OCI-LY7 (cell line): ENCODE measurements at regions of chr3 and their contacts with region 1.

Region 1: GRCh38 chr3:197711973-197712707 is 24.6 kb downstream of the RUBCN start:
- DNase-seq: peak; percentile 92
- H3K4me3 ChIP-seq: peak overlapping the region; percentile 60
- H3K27ac ChIP-seq: peak overlapping the region; percentile 82
- H3K4me1 ChIP-seq: peaks cover 66% of the 10 kb centered on the region
- CTCF ChIP-seq: no peak

Region 2: DNA sequence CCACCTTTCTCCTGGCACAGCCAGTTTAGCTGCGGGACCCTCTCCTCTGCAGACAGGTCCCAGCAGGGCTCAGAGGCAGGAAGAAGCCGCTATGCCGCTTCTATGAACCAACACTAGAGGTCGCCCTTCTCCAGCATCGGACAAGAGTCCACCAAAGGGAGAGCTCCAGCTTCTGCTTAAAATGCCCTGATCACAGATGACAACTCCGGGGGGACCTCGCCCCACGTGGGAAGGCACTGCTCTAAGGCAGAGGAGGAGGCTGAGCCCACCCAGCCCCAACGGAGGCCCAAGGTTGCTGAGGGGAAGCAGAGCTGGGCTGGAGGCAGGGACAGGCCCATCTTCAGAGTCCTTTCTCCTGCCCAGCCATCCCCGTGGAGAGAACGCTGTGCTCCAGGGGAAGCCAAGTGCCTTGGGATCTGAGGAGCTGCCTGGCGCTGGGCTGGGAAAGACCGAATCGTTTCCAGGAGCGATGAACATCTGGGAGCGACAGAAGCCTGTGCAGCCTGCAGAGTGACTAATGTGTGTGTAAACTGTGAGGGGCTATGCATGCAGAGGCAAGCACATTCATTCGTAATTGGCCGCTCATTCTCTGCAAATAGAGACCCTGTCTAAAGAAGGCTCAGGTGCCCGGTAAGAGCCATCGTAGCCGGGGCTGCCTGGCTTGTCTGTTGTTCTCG is 112.9 kb before region 1 on chr3:
- CTCF ChIA-PET with region 1: no interaction called
- POLR2A ChIA-PET with region 1: no interaction called
- intact Hi-C with region 1: no loop called
- DNase-seq: peak; percentile 88
- H3K4me3 ChIP-seq: no peak overlapping the region
- H3K27ac ChIP-seq: no peak overlapping the region
- H3K4me1 ChIP-seq: peaks cover 6% of the 10 kb centered on the region
- CTCF ChIP-seq: peak; percentile 92

Region 3: GRCh38 chr3:197725524-197725923 is 13.4 kb after region 1 on chr3:
- CTCF ChIA-PET with region 1: interaction called, 3 read pairs
- POLR2A ChIA-PET with region 1: interaction called, 11 read pairs
- intact Hi-C with region 1: no loop called
- DNase-seq: no peak
- H3K4me3 ChIP-seq: no peak overlapping the region
- H3K27ac ChIP-seq: no peak overlapping the region
- H3K4me1 ChIP-seq: peaks cover 36% of the 10 kb centered on the region
- CTCF ChIP-seq: no peak

Region 4: DNA sequence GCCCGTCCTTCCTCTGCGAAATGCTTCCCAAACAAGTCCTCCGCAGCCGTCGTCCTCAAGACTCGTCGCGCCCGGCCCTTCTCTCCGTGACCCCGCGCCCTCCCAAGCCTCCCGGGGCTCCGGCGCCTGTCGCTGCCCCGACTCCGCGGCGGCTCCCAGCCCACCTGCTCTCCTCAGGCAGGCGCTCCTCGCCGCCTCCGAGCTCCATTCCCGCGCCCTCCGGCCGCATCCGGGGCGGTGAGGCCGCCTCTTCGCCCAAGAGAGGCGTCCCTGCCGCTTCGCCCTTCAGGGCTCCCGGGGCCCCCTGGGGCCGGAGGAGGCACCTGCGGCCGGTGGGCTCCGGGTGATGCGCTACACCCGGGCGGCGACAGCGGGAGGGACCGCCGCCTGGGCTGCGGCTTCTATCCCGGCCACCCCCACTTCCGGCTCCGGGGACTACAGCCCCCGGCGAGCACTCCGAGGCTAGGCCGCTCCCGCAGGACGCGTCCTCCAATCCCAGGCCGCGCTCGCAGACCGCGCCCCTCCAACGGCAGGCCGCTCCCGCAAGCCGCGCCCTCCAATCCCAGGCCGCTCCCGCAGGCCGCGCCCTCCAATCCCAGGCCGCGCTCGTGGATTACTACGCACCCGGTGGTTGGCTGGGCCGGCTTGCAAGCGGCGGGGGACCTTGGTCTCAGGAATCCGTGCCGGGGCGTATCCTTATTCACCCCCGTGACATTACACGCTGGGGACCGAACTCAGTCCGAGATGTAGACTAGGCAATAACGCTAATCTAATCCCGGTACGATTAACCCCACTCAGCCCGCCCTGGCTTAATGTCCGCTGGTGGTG is 24.6 kb after region 1 on chr3 and contains the start of gene RUBCN:
- CTCF ChIA-PET with region 1: interaction called, 3 read pairs
- POLR2A ChIA-PET with region 1: interaction called, 41 read pairs
- intact Hi-C with region 1: loop called (anchors 1 kb)
- DNase-seq: peak; percentile 97
- H3K4me3 ChIP-seq: peak within 1 kb of the TSS; percentile 83
- H3K27ac ChIP-seq: peak within 1 kb of the TSS; percentile 94
- H3K4me1 ChIP-seq: peaks cover 47% of the 10 kb centered on the region
- CTCF ChIP-seq: no peak
- total RNA-seq, gene RUBCN: 37.1 and 45.1 TPM in 2 replicates

Region 5: GRCh38 chr3:197749601-197750395 is 37.7 kb after region 1 on chr3 and contains the start of gene FYTTD1:
- CTCF ChIA-PET with region 1: interaction called, 3 read pairs
- POLR2A ChIA-PET with region 1: interaction called, 5 read pairs
- intact Hi-C with region 1: loop called (anchors 1 kb)
- DNase-seq: peak; percentile 94
- H3K4me3 ChIP-seq: peak within 1 kb of the TSS; percentile 89
- H3K27ac ChIP-seq: peak within 1 kb of the TSS; percentile 76
- H3K4me1 ChIP-seq: peaks cover 41% of the 10 kb centered on the region
- CTCF ChIP-seq: peak; percentile 65
- total RNA-seq, gene FYTTD1: 47.6 and 63.8 TPM in 2 replicates

Region 6: DNA sequence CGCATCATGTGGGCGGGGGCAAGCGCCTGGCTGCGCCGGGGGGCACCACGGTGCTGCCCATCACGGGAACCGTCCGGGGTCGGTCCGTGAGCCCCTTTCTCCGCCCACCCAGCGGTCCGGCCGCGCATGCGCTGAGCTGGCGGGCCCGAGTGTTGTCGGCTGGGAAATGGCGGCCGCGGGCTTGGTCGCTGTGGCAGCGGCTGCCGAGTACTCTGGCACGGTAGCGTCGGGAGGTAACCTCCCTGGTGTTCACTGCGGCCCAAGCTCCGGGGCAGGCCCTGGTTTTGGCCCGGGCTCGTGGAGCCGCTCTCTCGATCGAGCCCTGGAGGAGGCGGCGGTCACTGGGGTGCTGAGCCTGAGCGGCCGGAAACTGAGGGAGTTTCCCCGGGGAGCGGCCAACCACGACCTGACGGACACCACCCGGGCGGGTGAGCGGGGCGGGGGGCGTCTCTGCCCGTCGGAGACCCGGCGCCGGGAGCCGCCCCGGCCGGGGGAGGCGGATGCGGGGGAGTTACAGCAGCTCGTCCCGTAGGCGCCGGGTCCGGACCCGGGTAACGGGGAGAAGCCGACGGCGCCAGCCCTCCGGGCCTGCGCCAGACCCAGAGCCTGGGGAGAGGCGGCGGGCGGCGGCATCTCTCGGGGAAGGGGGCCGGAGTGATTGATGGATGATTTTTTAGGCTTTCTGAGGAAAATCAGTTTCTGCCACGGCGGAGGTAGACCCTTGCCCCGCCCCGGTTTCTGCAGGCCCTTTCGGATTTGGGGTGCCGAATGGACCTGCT is 79.2 kb after region 1 on chr3 and contains the start of gene LRCH3:
- CTCF ChIA-PET with region 1: no interaction called
- POLR2A ChIA-PET with region 1: interaction called, 4 read pairs
- intact Hi-C with region 1: loop called (anchors 2 kb)
- DNase-seq: peak; percentile 88
- H3K4me3 ChIP-seq: peak within 1 kb of the TSS; percentile 84
- H3K27ac ChIP-seq: peak within 1 kb of the TSS; percentile 84
- H3K4me1 ChIP-seq: peaks cover 36% of the 10 kb centered on the region
- CTCF ChIP-seq: no peak
- total RNA-seq, gene LRCH3: 39.0 and 44.2 TPM in 2 replicates